ENCODE measurements at regions of chr10 and their contacts with region 1.

Region 1: GRCh38 chr10:132175907-132176581 is 10.7 kb upstream of the DPYSL4 start:
- DNase-seq: peak; percentile 74
- H3K4me3 Mint-ChIP-seq: no peak overlapping the region
- H3K27ac Mint-ChIP-seq: no peak overlapping the region
- H3K4me1 Mint-ChIP-seq: peaks cover 24% of the 10 kb centered on the region
- H3K27me3 Mint-ChIP-seq: peaks cover 23% of the 10 kb centered on the region

Region 2: DNA sequence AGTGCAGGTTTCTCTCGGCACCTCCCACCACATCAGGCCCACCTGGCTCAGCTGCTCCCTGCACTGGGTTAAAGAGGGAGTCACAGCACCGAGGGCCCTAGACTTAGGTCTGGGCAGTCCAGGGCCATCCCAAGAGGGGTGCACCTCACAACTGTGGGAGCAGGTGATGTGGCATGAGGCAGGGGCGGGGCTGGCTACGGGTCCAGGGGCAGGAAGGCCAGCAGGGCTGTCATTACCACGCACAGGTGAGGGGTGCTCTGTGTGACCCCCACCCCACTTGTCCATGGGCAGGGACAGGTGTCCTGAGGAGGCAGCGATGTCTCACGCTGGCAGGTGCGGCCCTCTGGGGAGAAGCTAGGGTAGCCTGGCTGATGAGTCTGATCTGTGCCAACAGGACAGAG is 29.8 kb before region 1 on chr10:
- CTCF ChIA-PET with region 1: no interaction called
- intact Hi-C with region 1: no loop called
- DNase-seq: no peak
- H3K4me3 Mint-ChIP-seq: no peak overlapping the region
- H3K27ac Mint-ChIP-seq: no peak overlapping the region
- H3K4me1 Mint-ChIP-seq: peaks cover 1% of the 10 kb centered on the region
- H3K27me3 Mint-ChIP-seq: no peaks in the 10 kb centered on the region

Region 3: DNA sequence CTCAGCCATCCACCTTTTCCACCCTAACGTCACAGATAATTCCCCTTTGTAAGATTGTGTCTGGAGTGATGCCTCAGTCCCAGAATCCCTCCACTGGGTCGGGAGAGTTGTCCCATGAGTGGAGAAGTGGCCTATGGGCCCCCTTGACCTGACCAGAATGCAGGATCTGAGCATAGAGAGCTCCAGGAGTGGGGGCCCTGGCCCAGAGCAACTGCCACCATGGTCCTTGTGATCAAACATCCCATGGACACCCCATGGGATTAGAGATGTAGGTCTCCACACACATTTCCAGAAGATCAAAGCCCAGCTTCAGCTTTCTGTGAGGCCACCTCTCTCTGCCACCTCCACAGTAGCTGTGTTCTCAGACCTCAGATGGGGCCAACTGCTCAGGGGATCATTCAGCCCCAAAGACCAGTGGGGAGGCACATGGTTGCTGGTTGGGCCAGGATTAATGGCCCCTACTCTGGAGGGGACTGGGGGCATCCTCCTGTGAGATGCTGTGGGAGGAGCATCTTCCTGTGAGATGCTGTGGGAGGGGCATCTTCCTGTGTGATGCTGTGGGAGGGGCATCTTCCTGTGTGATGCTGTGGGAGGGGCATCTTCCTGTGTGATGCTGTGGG is 17.8 kb before region 1 on chr10:
- CTCF ChIA-PET with region 1: no interaction called
- intact Hi-C with region 1: loop called (anchors 1 kb)
- DNase-seq: peak; percentile 46
- H3K4me3 Mint-ChIP-seq: peak overlapping the region; percentile 7
- H3K27ac Mint-ChIP-seq: peak overlapping the region; percentile 67
- H3K4me1 Mint-ChIP-seq: peaks cover 26% of the 10 kb centered on the region
- H3K27me3 Mint-ChIP-seq: no peaks in the 10 kb centered on the region